Left cardiac atrium (tissue), 4 donors: ENCODE measurements at regions of chrX and their contacts with region 1.

Region 1: GRCh38 chrX:38768079-38768478 is 33.2 kb upstream of the MID1IP1 start:
- DNase-seq: no peak
- ATAC-seq: peak in 1 of 2 donors; percentile 65

Region 2: DNA sequence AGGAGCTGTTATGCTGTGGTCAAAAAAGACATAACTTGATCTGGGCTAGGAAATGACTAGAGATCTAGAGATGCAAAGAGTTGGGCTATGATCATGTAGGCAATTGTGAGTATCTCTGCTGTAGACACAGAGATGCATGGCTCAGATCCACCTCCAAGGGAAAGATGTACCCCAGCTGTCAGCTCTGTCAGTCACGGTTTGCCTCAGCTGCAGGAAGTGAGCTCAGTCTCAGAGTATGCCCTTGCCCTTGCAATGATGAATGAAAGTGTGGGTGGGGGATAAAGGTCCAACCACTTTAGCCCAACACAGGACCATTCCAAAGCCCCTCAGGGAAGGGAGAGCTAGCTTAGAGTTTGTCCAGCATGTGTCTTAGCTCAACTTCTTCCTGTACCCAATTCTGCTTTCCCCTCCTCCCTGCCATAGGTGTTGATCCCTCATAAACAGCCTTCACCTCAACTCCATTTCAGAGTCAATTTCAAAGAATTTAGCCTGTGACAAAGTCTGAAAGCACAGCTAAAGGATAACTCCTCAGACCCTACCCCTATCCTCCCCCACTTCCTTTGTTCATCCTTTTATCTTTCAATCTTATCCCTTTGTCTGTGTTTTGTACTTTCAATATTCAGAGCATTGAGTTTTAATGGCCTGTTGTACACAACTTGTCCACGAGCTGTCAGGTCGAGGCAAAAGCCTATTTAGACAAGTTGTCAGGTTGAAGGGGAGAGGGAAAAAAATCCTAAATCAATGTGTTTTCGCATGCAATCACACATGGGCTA is 123.7 kb after region 1 on chrX:
- intact Hi-C with region 1: no loop called
- DNase-seq: no peak
- ATAC-seq: no peak

Region 3: GRCh38 chrX:39149761-39150160 is 381.7 kb after region 1 on chrX:
- intact Hi-C with region 1: loop called in 1 of 2 experiments (anchors 10 kb)
- DNase-seq: peak; percentile 73
- ATAC-seq: peak; percentile 67 to 74

Region 4: GRCh38 chrX:39247536-39247935 is 479.5 kb after region 1 on chrX:
- intact Hi-C with region 1: no loop called
- DNase-seq: no peak
- ATAC-seq: no peak

Region 5: DNA sequence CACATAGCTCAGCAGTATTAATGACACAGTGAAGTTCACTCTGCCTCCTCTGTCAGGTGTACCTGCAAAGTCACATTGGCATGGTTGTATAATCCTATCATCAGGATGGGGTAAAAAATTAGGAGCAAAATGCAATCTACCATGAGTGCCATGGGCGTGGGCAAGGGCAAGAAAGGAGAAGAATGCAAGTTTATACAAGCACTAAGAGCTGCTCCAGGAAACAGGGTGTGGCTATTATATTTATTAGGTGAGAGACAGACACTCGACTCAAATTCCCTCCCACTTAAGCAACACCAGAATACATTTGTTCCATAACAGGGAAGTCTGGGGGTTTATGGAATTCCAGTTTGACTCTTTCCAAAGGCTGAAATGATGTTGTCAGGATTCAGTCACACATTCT is 950.9 kb after region 1 on chrX:
- intact Hi-C with region 1: no loop called
- DNase-seq: no peak
- ATAC-seq: no peak